ENCODE measurements at regions of chr11 and their contacts with region 1.

Region 1: DNA sequence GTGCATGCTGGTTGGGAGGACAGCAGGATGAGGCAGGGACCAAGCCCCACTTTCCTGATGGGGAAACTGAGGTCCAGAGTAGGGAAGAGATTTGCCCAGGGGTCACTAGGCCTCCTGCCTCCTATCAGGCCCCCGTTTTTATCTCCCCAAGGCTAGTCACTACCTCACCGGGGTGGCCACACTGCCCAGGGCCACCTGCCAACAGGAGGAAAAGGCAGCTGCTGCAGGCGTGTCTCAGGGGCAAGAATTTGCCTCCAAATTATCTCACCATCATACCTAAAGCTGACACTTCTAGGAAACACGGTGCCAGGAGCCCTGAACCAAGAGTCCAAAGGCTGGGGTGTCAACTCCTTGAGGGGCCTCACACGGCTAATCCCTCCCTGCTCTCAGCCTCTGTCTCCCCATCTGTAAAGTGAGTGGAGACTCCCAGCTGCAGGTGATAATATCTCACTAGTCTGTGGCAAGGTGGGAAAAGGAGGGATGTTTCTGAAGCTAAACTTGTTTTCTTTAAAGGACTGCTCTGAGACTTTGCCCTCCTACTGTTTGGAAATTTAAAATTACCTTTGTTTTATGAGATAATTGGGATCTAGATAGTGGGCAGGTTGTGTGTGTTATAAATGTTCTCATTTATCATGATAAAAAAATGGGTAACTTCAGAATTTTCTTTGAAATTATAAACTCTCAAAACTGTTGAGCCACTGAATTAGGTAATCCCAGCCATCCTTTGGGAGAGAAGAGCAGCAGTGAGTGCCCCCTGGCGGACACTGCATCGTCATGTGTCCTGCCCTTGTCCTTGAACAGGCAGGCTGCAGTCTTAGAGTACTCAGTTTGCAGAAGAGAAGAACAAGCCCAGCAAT is 60.0 kb downstream of the MYO7A start:
- DNase-seq: peak; percentile 73 to 89 (median 80)
- H3K4me3 ChIP-seq: no peak overlapping the region
- H3K27ac ChIP-seq: no peak overlapping the region
- H3K4me1 ChIP-seq: no peaks in the 10 kb centered on the region
- H3K27me3 ChIP-seq: no peaks in the 10 kb centered on the region

Region 2: GRCh38 chr11:77113382-77114088 is 74.5 kb before region 1 on chr11:
- CTCF ChIA-PET with region 1: interaction called, 42 read pairs
- POLR2A ChIA-PET with region 1: no interaction called
- DNase-seq: peak; percentile 46 to 64 (median 56)
- H3K4me3 ChIP-seq: no peak overlapping the region
- H3K27ac ChIP-seq: no peak overlapping the region
- H3K4me1 ChIP-seq: no peaks in the 10 kb centered on the region
- H3K27me3 ChIP-seq: no peaks in the 10 kb centered on the region

Region 3: DNA sequence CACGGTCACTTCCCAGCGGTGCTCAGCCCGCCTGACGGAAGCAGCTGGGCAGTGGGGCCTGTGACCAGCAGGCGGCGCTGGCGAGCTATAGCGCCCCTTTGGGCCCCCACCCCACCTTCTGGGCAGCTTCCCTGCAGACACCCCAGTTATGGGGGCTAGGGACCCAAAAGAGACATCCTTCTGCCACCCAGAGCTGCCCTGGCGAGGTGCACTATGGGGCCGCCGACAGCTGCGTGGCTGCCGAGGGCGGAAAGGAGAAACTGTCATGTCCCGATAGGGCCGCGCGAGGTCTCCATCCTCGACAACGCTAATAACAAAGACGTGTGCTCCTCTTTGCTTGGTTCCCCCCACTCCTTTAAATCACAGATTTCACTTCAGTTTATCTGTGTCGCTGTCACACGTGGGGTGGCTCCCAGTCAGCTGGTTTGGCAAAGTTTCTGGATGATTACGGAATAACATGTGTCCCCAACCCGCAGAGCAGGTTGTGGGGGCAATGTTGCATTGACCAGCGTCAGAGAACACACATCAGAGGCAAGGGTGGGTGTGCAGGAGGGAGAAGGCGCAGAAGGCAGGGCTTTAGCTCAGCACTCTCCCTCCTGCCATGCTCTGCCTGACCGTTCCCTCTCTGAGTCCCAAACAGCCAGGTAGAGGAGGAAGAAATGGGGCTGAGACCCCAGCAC is 60.6 kb before region 1 on chr11:
- CTCF ChIA-PET with region 1: interaction called, 240 read pairs
- POLR2A ChIA-PET with region 1: no interaction called
- DNase-seq: peak; percentile 41 to 68 (median 62)
- H3K4me3 ChIP-seq: peak overlapping the region in 6 of 7 experiments; percentile 32 to 65 (median 52)
- H3K27ac ChIP-seq: no peak overlapping the region
- H3K4me1 ChIP-seq: peaks cover 0 to 25% (median 22%) of the 10 kb centered on the region in 4 experiments
- H3K27me3 ChIP-seq: peaks cover 0 to 8% (median 4%) of the 10 kb centered on the region in 5 experiments

Region 4: GRCh38 chr11:77147668-77148321 is 40.2 kb before region 1 on chr11:
- CTCF ChIA-PET with region 1: interaction called, 42 read pairs
- POLR2A ChIA-PET with region 1: no interaction called
- DNase-seq: peak; percentile 64 to 91 (median 90)
- H3K4me3 ChIP-seq: peak overlapping the region in 3 of 7 experiments; percentile 40 to 65 (median 52)
- H3K27ac ChIP-seq: no peak overlapping the region
- H3K4me1 ChIP-seq: peaks cover 11 to 51% (median 43%) of the 10 kb centered on the region in 4 experiments
- H3K27me3 ChIP-seq: peaks cover 0 to 10% (median 0%) of the 10 kb centered on the region in 5 experiments

Region 5: DNA sequence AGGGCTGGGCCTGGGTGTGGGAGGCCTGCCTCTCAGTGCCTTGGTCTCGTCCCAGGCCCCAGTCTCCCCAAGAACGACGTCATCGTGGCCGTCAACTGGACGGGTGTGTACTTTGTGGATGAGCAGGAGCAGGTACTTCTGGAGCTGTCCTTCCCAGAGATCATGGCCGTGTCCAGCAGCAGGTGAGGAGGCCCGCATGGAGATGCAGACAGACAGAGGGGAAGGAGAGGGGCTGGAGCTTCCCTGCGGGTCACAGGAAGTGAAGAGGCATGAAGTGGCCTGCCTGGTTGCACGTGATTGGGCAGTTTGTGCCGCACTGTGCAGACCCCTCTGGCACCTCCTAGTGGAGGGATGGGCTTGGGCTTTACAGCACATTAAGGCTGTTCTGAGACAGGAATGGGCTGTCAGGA is 10.4 kb after region 1 on chr11:
- CTCF ChIA-PET with region 1: interaction called, 12 read pairs
- POLR2A ChIA-PET with region 1: no interaction called
- DNase-seq: peak; percentile 27 to 46 (median 45)
- H3K4me3 ChIP-seq: no peak overlapping the region
- H3K27ac ChIP-seq: no peak overlapping the region
- H3K4me1 ChIP-seq: peaks cover 0 to 4% (median 0%) of the 10 kb centered on the region in 4 experiments
- H3K27me3 ChIP-seq: no peaks in the 10 kb centered on the region

Measured in common myeloid progenitor, CD34-positive (primary cell).